ENCODE measurements at regions of chr14 and their contacts with region 1.

Region 1: DNA sequence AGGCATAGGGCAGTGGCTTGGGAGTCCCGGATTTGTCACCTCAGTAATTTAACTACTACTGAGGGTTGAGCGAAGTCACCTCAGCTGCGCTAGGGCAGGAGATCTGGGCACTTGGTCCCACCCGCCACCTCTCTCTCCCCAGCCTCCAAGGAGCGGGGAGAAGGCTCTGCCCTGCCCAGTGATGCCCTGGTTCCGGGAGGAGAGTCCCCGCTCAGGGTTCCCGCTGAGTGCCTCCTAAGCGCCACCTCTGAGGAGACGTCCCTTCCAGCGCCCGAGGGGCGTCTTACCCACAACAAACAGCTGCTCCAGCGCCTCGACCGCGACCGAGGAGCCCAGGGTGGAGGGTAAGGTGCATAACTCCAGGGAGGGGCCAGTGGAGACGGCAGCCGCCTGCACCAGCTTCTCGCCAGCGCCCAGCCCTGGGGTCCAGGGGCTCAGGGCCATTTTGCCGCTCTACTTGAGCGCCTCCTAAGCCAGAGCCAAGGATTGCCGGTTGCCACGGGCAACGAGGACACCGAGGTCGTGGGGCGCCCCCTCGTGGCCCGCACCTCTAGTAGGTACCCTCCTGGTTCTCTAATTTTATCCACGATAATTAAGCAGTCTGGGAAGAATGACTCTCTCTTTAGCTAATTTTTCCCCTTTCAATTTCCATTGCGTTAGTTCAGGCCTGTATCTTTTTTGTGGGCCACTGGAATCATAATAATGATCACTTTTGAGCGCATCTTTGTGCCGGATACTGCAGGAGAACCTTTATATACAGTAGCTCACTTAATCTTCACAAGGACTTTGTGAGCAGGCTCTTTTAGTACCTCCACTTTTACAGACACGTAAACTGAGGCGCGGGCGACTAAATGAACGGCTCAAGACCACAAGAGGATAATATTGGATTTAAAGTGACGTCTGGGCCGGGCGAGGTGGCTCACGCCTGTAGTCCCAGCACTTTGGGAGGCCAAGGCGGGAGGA is at the start of gene CCDC175:
- DNase-seq: peak; percentile 83 to 93
- H3K4me3 ChIP-seq: peak within 1 kb of the TSS; percentile 64 to 80 (median 78)
- H3K27ac ChIP-seq: no peak within 1 kb of the TSS; the same call in 1 of the 2 replicates
- H3K4me1 ChIP-seq: no peaks in the 10 kb centered on the region
- H3K27me3 ChIP-seq: no peaks in the 10 kb centered on the region
- CTCF ChIP-seq: peak; percentile 88 to 99 (median 89)
- EP300 ChIP-seq: no peak
- POLR2A ChIP-seq: peak in 1 of 2 experiments; percentile 42; a peak in 1 of 3 replicates
- RAD21 ChIP-seq: peak; percentile 90 to 91
- total RNA-seq, gene CCDC175: 0.19 TPM in 1 of 2 replicates, not detected in the other

Region 2: GRCh38 chr14:59475709-59476108 is 100.9 kb before region 1 on chr14:
- CTCF ChIA-PET with region 1: interaction called, 11 read pairs
- POLR2A ChIA-PET with region 1: no interaction called
- DNase-seq: no peak
- H3K4me3 ChIP-seq: no peak overlapping the region
- H3K27ac ChIP-seq: no peak overlapping the region
- H3K4me1 ChIP-seq: no peaks in the 10 kb centered on the region
- H3K27me3 ChIP-seq: no peaks in the 10 kb centered on the region
- CTCF ChIP-seq: no peak
- EP300 ChIP-seq: no peak
- POLR2A ChIP-seq: no peak
- RAD21 ChIP-seq: no peak

Region 3: DNA sequence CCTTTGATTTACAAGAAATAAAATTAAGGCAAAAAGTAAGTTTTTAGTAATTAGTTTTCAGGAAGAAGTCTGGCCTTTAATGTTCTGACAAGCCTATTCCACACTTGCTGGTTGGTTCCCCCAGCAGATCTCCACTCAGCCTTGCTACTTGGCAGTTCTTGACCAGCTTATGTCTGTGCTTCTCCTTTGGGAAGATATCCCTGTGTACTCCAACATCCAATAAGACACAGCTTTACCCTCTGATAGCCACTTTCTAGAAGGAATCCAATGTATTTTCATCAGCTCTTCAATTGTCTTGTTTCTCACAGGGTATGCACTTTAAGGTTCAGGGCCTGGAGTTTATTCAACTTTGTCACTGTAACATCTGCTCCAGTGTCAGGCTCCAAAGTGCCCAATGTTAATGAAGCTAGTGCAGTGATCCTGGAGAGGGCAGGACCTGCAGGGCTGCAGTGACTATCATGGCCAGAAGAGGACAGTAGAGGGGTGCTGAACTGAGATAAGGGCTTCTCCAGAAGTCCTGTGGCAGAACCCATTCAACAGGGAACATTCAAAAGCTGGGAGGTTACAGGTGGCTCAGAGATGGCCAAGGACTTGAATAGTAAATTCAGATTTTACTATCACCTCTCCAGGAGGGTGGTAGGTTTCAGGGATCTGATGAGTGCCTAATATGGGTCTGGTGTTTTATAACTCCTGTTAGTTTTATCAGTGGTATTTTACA is 69.4 kb before region 1 on chr14:
- CTCF ChIA-PET with region 1: interaction called, 462 read pairs
- POLR2A ChIA-PET with region 1: interaction called, 4 read pairs
- DNase-seq: peak; percentile 58 to 90
- H3K4me3 ChIP-seq: no peak overlapping the region
- H3K27ac ChIP-seq: no peak overlapping the region
- H3K4me1 ChIP-seq: peaks cover 0 to 3% (median under 1%) of the 10 kb centered on the region in 4 experiments; a peak in 2 of 7 replicates
- H3K27me3 ChIP-seq: no peaks in the 10 kb centered on the region
- CTCF ChIP-seq: peak; percentile 88 to 99 (median 96)
- EP300 ChIP-seq: no peak
- POLR2A ChIP-seq: no peak
- RAD21 ChIP-seq: peak; percentile 88 to 93

Region 4: GRCh38 chr14:59534361-59534987 is 42.1 kb before region 1 on chr14:
- CTCF ChIA-PET with region 1: interaction called, 19 read pairs
- POLR2A ChIA-PET with region 1: no interaction called
- DNase-seq: no peak
- H3K4me3 ChIP-seq: no peak overlapping the region
- H3K27ac ChIP-seq: no peak overlapping the region
- H3K4me1 ChIP-seq: no peaks in the 10 kb centered on the region
- H3K27me3 ChIP-seq: no peaks in the 10 kb centered on the region
- CTCF ChIP-seq: no peak
- EP300 ChIP-seq: no peak
- POLR2A ChIP-seq: no peak
- RAD21 ChIP-seq: no peak

Region 5: GRCh38 chr14:59595071-59595470 is 18.5 kb after region 1 on chr14:
- CTCF ChIA-PET with region 1: interaction called, 22 read pairs
- POLR2A ChIA-PET with region 1: no interaction called
- DNase-seq: no peak
- H3K4me3 ChIP-seq: no peak overlapping the region
- H3K27ac ChIP-seq: no peak overlapping the region
- H3K4me1 ChIP-seq: no peaks in the 10 kb centered on the region
- H3K27me3 ChIP-seq: no peaks in the 10 kb centered on the region
- CTCF ChIP-seq: no peak
- EP300 ChIP-seq: no peak
- POLR2A ChIP-seq: no peak
- RAD21 ChIP-seq: no peak

Region 6: DNA sequence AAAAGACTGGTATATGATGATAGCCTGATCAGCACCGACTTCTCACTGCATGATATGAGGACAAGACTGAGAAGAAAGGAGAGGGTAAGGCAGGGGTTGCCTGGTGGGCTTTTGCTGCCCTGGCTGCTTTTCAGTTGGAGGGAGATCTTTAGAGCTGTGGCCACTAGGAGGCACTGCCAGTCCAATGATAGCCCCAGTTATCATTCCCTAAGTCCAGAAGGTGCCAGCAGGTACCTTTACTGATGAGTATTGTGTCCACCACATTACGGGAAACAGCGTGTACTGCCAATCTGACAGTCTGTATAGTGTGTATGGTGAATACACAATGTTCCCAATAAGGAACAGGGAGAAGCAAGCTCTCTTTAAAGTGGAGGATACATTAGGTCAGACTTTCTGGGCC is 55.8 kb after region 1 on chr14:
- CTCF ChIA-PET with region 1: interaction called, 11 read pairs
- POLR2A ChIA-PET with region 1: no interaction called
- DNase-seq: peak in 1 of 2 experiments; percentile 54
- H3K4me3 ChIP-seq: no peak overlapping the region
- H3K27ac ChIP-seq: no peak overlapping the region
- H3K4me1 ChIP-seq: peaks cover 0 to 2% (median 0%) of the 10 kb centered on the region in 4 experiments; a peak in 3 of 7 replicates
- H3K27me3 ChIP-seq: peaks cover 2 to 11% (median 9%) of the 10 kb centered on the region in 4 experiments
- CTCF ChIP-seq: peak; percentile 66 to 88 (median 87)
- EP300 ChIP-seq: no peak
- POLR2A ChIP-seq: no peak
- RAD21 ChIP-seq: peak; percentile 87 to 89

Measured in H1 (cell line).